GM12878 (cell line): ENCODE measurements at regions of chr12 and their contacts with region 1.

Region 1: DNA sequence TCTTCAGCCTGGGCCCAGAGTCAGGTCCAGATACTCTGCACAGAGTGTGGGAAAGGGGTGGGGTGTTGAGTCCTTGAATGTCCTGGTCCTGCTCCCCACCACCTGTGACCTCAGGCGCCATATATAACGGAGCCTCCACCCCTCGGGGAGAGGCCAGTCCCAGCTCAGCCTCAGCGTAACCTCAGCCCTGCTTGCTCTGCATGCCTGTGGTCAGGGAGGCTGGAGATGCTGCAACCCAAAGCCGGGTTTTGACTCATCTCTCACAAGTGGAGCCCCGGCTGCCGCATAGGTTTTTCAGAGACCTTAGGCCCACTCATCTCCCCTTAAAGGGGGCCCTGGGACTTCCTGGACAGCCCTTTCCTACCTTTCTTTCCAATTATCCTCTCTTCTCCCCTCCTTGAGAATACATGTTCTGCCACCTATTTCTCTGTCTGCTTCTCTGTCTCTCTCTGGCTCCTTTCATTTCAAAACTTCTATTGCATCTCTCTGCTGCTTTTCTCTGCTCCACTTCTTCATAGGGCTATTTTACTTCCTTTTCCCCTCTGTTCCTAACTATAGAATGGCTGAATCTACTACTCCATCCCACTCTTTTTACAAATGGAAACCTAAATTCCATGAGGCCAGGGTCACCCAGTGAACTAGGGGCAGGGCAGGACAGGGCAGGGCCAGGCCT is 1.2 kb downstream of the ITGB7 start:
- DNase-seq: peak; percentile 87
- ATAC-seq: peak; percentile 80
- H3K4me3 ChIP-seq: peak overlapping the region; percentile 90
- H3K27ac ChIP-seq: peak overlapping the region; percentile 86
- H3K4me1 ChIP-seq: peaks cover 54% of the 10 kb centered on the region
- H3K27me3 ChIP-seq: no peaks in the 10 kb centered on the region
- CTCF ChIP-seq: no peak
- EP300 ChIP-seq: peak; percentile 60 to 77; a peak in 2 of 4 replicates
- POLR2A ChIP-seq: peak; percentile 75
- RAD21 ChIP-seq: no peak

Region 2: GRCh38 chr12:52980693-52981423 is 225.0 kb before region 1 on chr12:
- CTCF ChIA-PET with region 1: no interaction called
- POLR2A ChIA-PET with region 1: no interaction called
- RAD21 ChIA-PET with region 1: no interaction called
- SMC1A ChIA-PET with region 1: no interaction called
- in situ Hi-C with region 1: no loop called
- intact Hi-C with region 1: no loop called
- DNase-seq: peak; percentile 51
- ATAC-seq: peak; percentile 98
- H3K4me3 ChIP-seq: no peak overlapping the region
- H3K27ac ChIP-seq: no peak overlapping the region
- H3K4me1 ChIP-seq: no peaks in the 10 kb centered on the region
- H3K27me3 ChIP-seq: no peaks in the 10 kb centered on the region; a peak in 1 of 4 replicates
- CTCF ChIP-seq: peak; percentile 97 to 100 (median 99)
- EP300 ChIP-seq: no peak
- POLR2A ChIP-seq: no peak
- RAD21 ChIP-seq: peak; percentile 94

Region 3: GRCh38 chr12:53123578-53124351 is 82.1 kb before region 1 on chr12:
- CTCF ChIA-PET with region 1: no interaction called
- POLR2A ChIA-PET with region 1: no interaction called
- RAD21 ChIA-PET with region 1: no interaction called
- SMC1A ChIA-PET with region 1: no interaction called
- in situ Hi-C with region 1: no loop called
- intact Hi-C with region 1: no loop called
- DNase-seq: no peak
- ATAC-seq: no peak
- H3K4me3 ChIP-seq: no peak overlapping the region
- H3K27ac ChIP-seq: no peak overlapping the region
- H3K4me1 ChIP-seq: no peaks in the 10 kb centered on the region
- H3K27me3 ChIP-seq: no peaks in the 10 kb centered on the region; a peak in 1 of 4 replicates
- CTCF ChIP-seq: no peak
- EP300 ChIP-seq: no peak
- POLR2A ChIP-seq: no peak
- RAD21 ChIP-seq: no peak

Region 4: GRCh38 chr12:53174881-53175491 is 30.9 kb before region 1 on chr12:
- CTCF ChIA-PET with region 1: interaction called, 32 read pairs
- POLR2A ChIA-PET with region 1: interaction called, 48 read pairs
- RAD21 ChIA-PET with region 1: interaction called, 31 read pairs
- SMC1A ChIA-PET with region 1: interaction called, 36 read pairs
- in situ Hi-C with region 1: no loop called
- intact Hi-C with region 1: loop called (anchors 2 kb)
- DNase-seq: no peak
- ATAC-seq: peak; percentile 48
- H3K4me3 ChIP-seq: no peak overlapping the region
- H3K27ac ChIP-seq: no peak overlapping the region
- H3K4me1 ChIP-seq: peaks cover 14% of the 10 kb centered on the region; the same call in 1 of the 2 replicates
- H3K27me3 ChIP-seq: no peaks in the 10 kb centered on the region
- CTCF ChIP-seq: peak in 2 of 3 experiments; percentile 19 to 33; a peak in 2 of 6 replicates
- EP300 ChIP-seq: no peak
- POLR2A ChIP-seq: no peak
- RAD21 ChIP-seq: peak; percentile 42

Region 5: GRCh38 chr12:53180220-53180930 is 25.5 kb before region 1 on chr12 and contains the starts of genes CSAD and ZNF740:
- CTCF ChIA-PET with region 1: interaction called, 32 read pairs
- POLR2A ChIA-PET with region 1: interaction called, 48 read pairs
- RAD21 ChIA-PET with region 1: interaction called, 31 read pairs
- SMC1A ChIA-PET with region 1: interaction called, 36 read pairs
- in situ Hi-C with region 1: no loop called
- intact Hi-C with region 1: loop called (anchors 2 kb)
- DNase-seq: peak; percentile 91
- ATAC-seq: peak; percentile 96
- H3K4me3 ChIP-seq: peak within 1 kb of the TSS; percentile 78
- H3K27ac ChIP-seq: peak within 1 kb of the TSS; percentile 91
- H3K4me1 ChIP-seq: peaks cover 13% of the 10 kb centered on the region; the same call in 1 of the 2 replicates
- H3K27me3 ChIP-seq: no peaks in the 10 kb centered on the region
- CTCF ChIP-seq: peak in 2 of 3 experiments; percentile 2 to 12; a peak in 1 of 6 replicates
- EP300 ChIP-seq: no peak
- POLR2A ChIP-seq: peak; percentile 81
- RAD21 ChIP-seq: no peak
- polyA plus RNA-seq, gene CSAD: 1.2 to 2.0 TPM
- polyA plus RNA-seq, gene ZNF740: 1.4 to 1.8 TPM

Region 6: GRCh38 chr12:53190108-53190729 is 15.7 kb before region 1 on chr12:
- CTCF ChIA-PET with region 1: interaction called, 50 read pairs
- POLR2A ChIA-PET with region 1: interaction called, 6 read pairs
- RAD21 ChIA-PET with region 1: interaction called, 4 read pairs
- SMC1A ChIA-PET with region 1: interaction called, 17 read pairs
- in situ Hi-C with region 1: no loop called
- intact Hi-C with region 1: no loop called
- DNase-seq: no peak
- ATAC-seq: peak; percentile 90
- H3K4me3 ChIP-seq: no peak overlapping the region
- H3K27ac ChIP-seq: no peak overlapping the region
- H3K4me1 ChIP-seq: no peaks in the 10 kb centered on the region
- H3K27me3 ChIP-seq: no peaks in the 10 kb centered on the region
- CTCF ChIP-seq: peak; percentile 52 to 87 (median 74)
- EP300 ChIP-seq: no peak
- POLR2A ChIP-seq: peak; percentile 66
- RAD21 ChIP-seq: peak; percentile 59

Region 7: GRCh38 chr12:53220801-53221202 is 14.9 kb after region 1 on chr12:
- CTCF ChIA-PET with region 1: interaction called, 24 read pairs
- POLR2A ChIA-PET with region 1: interaction called, 28 read pairs
- RAD21 ChIA-PET with region 1: interaction called, 54 read pairs
- SMC1A ChIA-PET with region 1: interaction called, 20 read pairs
- in situ Hi-C with region 1: no loop called
- intact Hi-C with region 1: no loop called
- DNase-seq: peak; percentile 69
- ATAC-seq: peak; percentile 86
- H3K4me3 ChIP-seq: peak overlapping the region; percentile 86
- H3K27ac ChIP-seq: peak overlapping the region; percentile 79
- H3K4me1 ChIP-seq: peaks cover 22% of the 10 kb centered on the region
- H3K27me3 ChIP-seq: no peaks in the 10 kb centered on the region
- CTCF ChIP-seq: no peak
- EP300 ChIP-seq: no peak
- POLR2A ChIP-seq: no peak
- RAD21 ChIP-seq: no peak

Region 8: GRCh38 chr12:53251477-53252348 is 45.8 kb after region 1 on chr12:
- CTCF ChIA-PET with region 1: interaction called, 136 read pairs
- POLR2A ChIA-PET with region 1: interaction called, 4 read pairs
- RAD21 ChIA-PET with region 1: interaction called, 8 read pairs
- SMC1A ChIA-PET with region 1: interaction called, 17 read pairs
- in situ Hi-C with region 1: no loop called
- intact Hi-C with region 1: no loop called
- DNase-seq: peak; percentile 24
- ATAC-seq: peak; percentile 92
- H3K4me3 ChIP-seq: peak overlapping the region; percentile 99
- H3K27ac ChIP-seq: peak overlapping the region; percentile 66
- H3K4me1 ChIP-seq: peaks cover 28% of the 10 kb centered on the region
- H3K27me3 ChIP-seq: no peaks in the 10 kb centered on the region
- CTCF ChIP-seq: peak; percentile 52 to 83 (median 64); a peak in 5 of 6 replicates
- EP300 ChIP-seq: no peak
- POLR2A ChIP-seq: peak; percentile 92
- RAD21 ChIP-seq: peak; percentile 83

Region 9: GRCh38 chr12:53568809-53569557 is 363.1 kb after region 1 on chr12:
- CTCF ChIA-PET with region 1: no interaction called
- POLR2A ChIA-PET with region 1: no interaction called
- RAD21 ChIA-PET with region 1: no interaction called
- SMC1A ChIA-PET with region 1: no interaction called
- in situ Hi-C with region 1: no loop called
- intact Hi-C with region 1: no loop called
- DNase-seq: no peak
- ATAC-seq: no peak
- H3K4me3 ChIP-seq: no peak overlapping the region
- H3K27ac ChIP-seq: no peak overlapping the region
- H3K4me1 ChIP-seq: peaks cover 14% of the 10 kb centered on the region
- H3K27me3 ChIP-seq: no peaks in the 10 kb centered on the region
- CTCF ChIP-seq: no peak
- EP300 ChIP-seq: no peak
- POLR2A ChIP-seq: no peak
- RAD21 ChIP-seq: no peak